ENCODE measurements at regions of chr7 and their contacts with region 1.

Region 1: GRCh38 chr7:90403174-90404113 is at the start of gene CLDN12:
- DNase-seq: peak; percentile 85 to 92 (median 90)
- ATAC-seq: peak; percentile 99
- H3K4me3 ChIP-seq: peak within 1 kb of the TSS; percentile 9 to 58
- H3K27ac ChIP-seq: peak within 1 kb of the TSS; percentile 67 to 95 (median 76)
- H3K4me1 ChIP-seq: peaks cover 14% of the 10 kb centered on the region
- H3K27me3 ChIP-seq: no peaks in the 10 kb centered on the region
- CTCF ChIP-seq: peak in 1 of 7 experiments; percentile 7
- POLR2A ChIP-seq: peak; percentile 43 to 93 (median 91)
- total RNA-seq, gene CLDN12: 18.1 to 25.2 TPM

Region 2: DNA sequence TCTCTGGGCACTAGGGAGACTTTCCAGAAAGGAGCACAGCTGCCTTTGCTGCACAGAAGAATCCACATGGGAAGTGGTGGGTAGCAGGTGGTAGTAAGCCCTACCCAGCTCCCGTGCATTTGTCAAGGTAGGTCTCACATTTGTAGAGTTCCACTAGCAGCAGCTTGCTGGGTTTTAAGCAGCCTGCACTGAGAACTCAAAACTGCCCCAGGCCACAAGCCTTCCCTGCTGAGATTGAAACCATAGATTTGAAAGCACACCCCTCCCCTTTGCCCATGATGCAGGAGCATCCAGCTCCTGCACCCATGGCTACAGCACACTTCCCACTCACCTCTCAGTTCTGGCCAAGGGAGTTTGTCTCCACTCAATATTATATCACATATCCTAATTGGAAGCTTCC is 853.7 kb before region 1 on chr7:
- intact Hi-C with region 1: no loop called
- DNase-seq: no peak
- ATAC-seq: no peak
- H3K4me3 ChIP-seq: no peak overlapping the region
- H3K27ac ChIP-seq: no peak overlapping the region
- H3K4me1 ChIP-seq: no peaks in the 10 kb centered on the region
- H3K27me3 ChIP-seq: no peaks in the 10 kb centered on the region
- CTCF ChIP-seq: no peak
- POLR2A ChIP-seq: no peak

Region 3: DNA sequence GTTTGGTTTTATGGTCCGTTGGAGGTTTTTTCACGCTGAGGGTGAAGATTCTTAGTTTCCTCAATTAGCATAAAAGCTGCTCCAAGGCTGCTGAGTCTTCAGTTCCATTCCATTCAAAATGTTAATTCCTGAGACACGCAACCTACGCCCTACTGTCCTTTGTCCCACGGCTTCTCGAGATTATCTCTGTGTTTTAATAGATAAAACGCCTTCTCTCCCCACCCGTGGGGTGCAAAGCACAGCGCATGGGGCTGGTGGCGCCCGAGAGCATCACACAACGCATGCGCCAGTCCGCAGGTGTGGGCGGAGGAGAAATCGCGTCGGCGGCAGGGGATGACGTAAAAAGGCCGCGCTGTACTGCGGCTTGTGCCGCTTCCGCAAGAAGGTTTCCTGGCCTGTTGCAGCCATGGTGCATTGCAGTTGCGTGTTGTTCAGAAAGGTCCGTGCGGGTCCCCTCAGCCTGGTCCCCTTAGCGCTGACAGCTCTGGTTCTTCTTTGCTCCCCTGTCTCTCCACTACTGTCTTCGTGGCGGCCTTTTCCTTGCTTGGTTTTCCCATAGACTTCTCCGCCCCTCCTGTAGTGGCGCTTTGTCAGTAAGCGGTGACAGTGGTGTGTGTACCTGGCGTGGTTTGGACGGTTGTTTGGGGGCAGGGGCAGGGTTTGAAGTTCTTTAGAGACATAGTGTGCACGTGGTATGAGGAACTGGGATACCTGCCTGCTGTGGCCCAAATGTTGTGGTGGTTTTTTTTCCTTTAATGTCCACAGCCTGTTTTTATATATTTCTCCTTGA is 56.9 kb before region 1 on chr7 and contains the start of gene GTPBP10:
- intact Hi-C with region 1: loop called (anchors 10 kb)
- DNase-seq: peak; percentile 94
- ATAC-seq: peak; percentile 99
- H3K4me3 ChIP-seq: peak within 1 kb of the TSS; percentile 40 to 84
- H3K27ac ChIP-seq: peak within 1 kb of the TSS; percentile 55 to 91 (median 81)
- H3K4me1 ChIP-seq: peaks cover 22% of the 10 kb centered on the region
- H3K27me3 ChIP-seq: no peaks in the 10 kb centered on the region
- CTCF ChIP-seq: peak; percentile 51 to 92 (median 82)
- POLR2A ChIP-seq: peak; percentile 69 to 93 (median 90)
- total RNA-seq, gene GTPBP10: 3.6 to 20.8 TPM